CD8-positive, alpha-beta T cell (primary cell): ENCODE measurements at regions of chr4 and their contacts with region 1.

Region 1: DNA sequence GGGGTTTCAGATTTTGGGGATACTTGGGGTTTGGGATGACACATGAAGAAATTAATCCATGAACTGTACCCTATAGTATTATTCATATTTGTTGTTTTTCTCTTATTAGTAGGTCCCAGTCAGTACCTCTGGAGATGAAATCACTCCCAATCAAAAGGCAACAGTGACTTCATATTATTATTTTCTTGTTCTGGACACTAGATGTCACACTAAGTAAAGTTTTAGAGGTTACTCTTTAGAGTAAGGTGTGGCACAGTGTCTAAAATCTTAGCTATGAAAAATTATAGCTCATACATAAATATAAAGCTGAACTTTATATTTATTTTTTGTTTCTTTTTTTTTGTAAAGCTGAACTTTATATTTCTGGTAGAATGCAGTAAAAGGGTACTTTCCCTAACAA is 35.1 kb downstream of the FAM114A1 start:
- DNase-seq: peak in 2 of 9 experiments; percentile 52 to 68
- ATAC-seq: peak; percentile 87
- H3K4me3 ChIP-seq: no peak overlapping the region
- H3K4me3 Mint-ChIP-seq: no peak overlapping the region
- H3K27ac ChIP-seq: no peak overlapping the region
- H3K27ac Mint-ChIP-seq: no peak overlapping the region
- H3K4me1 ChIP-seq: no peaks in the 10 kb centered on the region
- H3K4me1 Mint-ChIP-seq: peaks cover 4% of the 10 kb centered on the region
- H3K27me3 ChIP-seq: no peaks in the 10 kb centered on the region
- H3K27me3 Mint-ChIP-seq: peaks cover 2% of the 10 kb centered on the region
- CTCF ChIP-seq: peak; percentile 71

Region 2: DNA sequence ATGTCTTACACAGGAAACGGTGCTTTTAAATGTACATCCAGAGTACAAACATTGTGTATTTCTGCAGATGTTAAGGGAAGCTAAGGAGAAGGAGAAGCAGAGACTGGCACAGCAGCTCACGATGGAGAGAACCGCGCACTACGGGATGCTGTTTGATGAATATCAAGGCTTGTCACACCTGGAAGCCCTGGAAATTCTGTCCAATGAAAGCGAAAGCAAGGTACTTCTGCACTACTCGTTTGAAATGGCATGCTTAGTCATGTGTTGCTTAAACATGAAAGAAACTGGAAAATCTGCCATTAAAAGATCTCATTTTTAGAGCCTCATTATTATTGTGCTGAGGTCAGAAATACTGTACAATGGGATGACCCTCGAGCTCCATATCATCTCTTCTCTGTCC is 12.2 kb after region 1 on chr4:
- CTCF ChIA-PET with region 1: interaction called, 25 read pairs
- POLR2A ChIA-PET with region 1: no interaction called
- intact Hi-C with region 1: no loop called
- DNase-seq: peak in 1 of 9 experiments; percentile 7
- ATAC-seq: no peak
- H3K4me3 ChIP-seq: no peak overlapping the region
- H3K4me3 Mint-ChIP-seq: peak overlapping the region; percentile 49
- H3K27ac ChIP-seq: no peak overlapping the region
- H3K27ac Mint-ChIP-seq: no peak overlapping the region
- H3K4me1 ChIP-seq: no peaks in the 10 kb centered on the region
- H3K4me1 Mint-ChIP-seq: peaks cover 9% of the 10 kb centered on the region
- H3K27me3 ChIP-seq: no peaks in the 10 kb centered on the region
- H3K27me3 Mint-ChIP-seq: no peaks in the 10 kb centered on the region
- CTCF ChIP-seq: no peak

Region 3: GRCh38 chr4:39054497-39054896 is 151.8 kb after region 1 on chr4:
- CTCF ChIA-PET with region 1: interaction called, 13 read pairs
- POLR2A ChIA-PET with region 1: no interaction called
- intact Hi-C with region 1: no loop called
- DNase-seq: no peak
- ATAC-seq: no peak
- H3K4me3 ChIP-seq: no peak overlapping the region
- H3K4me3 Mint-ChIP-seq: no peak overlapping the region
- H3K27ac ChIP-seq: no peak overlapping the region
- H3K27ac Mint-ChIP-seq: no peak overlapping the region
- H3K4me1 ChIP-seq: no peaks in the 10 kb centered on the region
- H3K4me1 Mint-ChIP-seq: peaks cover 17% of the 10 kb centered on the region
- H3K27me3 ChIP-seq: no peaks in the 10 kb centered on the region
- H3K27me3 Mint-ChIP-seq: no peaks in the 10 kb centered on the region
- CTCF ChIP-seq: no peak

Region 4: DNA sequence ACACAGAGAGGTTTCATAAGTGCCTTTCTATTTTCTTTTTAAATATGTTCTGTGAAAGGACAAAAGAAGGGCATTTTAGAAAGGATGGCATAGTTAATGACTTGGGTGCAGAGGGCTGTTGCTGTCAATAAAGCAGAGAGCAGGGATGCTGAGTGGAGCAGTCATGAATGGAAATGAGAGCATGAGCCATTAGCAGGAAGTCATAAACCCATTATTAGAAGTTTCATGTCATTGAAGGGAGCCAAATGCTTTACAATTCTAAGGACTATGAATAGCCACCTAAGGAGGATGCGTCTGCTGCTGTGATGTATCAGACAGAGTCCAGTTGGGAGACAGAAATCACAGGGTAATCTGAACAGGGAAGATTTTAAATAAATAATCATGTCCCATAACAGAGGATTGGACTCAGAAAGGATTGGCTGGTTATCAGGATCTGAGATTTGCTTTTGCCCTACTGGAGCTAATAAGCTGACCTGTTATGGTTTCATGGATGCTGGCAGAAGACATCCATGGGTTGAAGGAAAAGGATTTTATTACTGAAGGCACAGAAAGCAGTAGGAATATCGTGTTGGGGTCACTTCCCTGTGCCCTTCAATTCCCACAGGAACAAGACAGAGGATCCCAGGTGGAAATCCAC is 232.1 kb after region 1 on chr4:
- CTCF ChIA-PET with region 1: interaction called, 180 read pairs
- POLR2A ChIA-PET with region 1: interaction called, 4 read pairs
- intact Hi-C with region 1: loop called (anchors 1 kb)
- DNase-seq: no peak
- ATAC-seq: no peak
- H3K4me3 ChIP-seq: no peak overlapping the region
- H3K4me3 Mint-ChIP-seq: no peak overlapping the region
- H3K27ac ChIP-seq: no peak overlapping the region
- H3K27ac Mint-ChIP-seq: no peak overlapping the region
- H3K4me1 ChIP-seq: peaks cover 3% of the 10 kb centered on the region
- H3K4me1 Mint-ChIP-seq: peaks cover 4% of the 10 kb centered on the region
- H3K27me3 ChIP-seq: no peaks in the 10 kb centered on the region
- H3K27me3 Mint-ChIP-seq: no peaks in the 10 kb centered on the region
- CTCF ChIP-seq: no peak

Region 5: DNA sequence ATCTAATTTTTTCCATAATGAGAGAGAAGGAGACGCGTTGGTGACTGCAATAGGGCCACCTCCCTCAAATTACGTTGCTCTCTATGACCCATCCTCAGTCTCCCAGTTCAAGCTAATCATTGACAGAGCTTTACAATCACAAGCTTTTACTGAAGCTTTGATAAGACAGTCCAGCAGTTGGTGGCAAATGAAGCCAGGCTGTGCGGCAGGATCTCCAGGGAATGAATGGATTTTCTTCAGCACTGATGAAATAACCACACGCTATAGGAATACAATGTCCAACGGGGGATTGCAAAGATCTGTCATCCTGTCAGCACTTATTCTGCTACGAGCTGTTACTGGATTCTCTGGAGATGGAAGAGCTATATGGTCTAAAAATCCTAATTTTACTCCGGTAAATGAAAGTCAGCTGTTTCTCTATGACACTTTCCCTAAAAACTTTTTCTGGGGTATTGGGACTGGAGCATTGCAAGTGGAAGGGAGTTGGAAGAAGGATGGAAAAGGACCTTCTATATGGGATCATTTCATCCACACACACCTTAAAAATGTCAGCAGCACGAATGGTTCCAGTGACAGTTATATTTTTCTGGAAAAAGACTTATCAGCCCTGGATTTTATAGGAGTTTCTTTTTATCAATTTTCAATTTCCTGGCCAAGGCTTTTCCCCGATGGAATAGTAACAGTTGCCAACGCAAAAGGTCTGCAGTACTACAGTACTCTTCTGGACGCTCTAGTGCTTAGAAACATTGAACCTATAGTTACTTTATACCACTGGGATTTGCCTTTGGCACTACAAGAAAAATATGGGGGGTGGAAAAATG is 504.3 kb after region 1 on chr4 and contains the start of gene KLB:
- CTCF ChIA-PET with region 1: no interaction called
- POLR2A ChIA-PET with region 1: no interaction called
- intact Hi-C with region 1: loop called in 1 of 2 experiments (anchors 10 kb)
- DNase-seq: no peak
- ATAC-seq: no peak
- H3K4me3 ChIP-seq: no peak within 1 kb of the TSS
- H3K4me3 Mint-ChIP-seq: no peak within 1 kb of the TSS
- H3K27ac ChIP-seq: no peak within 1 kb of the TSS
- H3K27ac Mint-ChIP-seq: no peak within 1 kb of the TSS
- H3K4me1 ChIP-seq: no peaks in the 10 kb centered on the region
- H3K4me1 Mint-ChIP-seq: no peaks in the 10 kb centered on the region
- H3K27me3 ChIP-seq: no peaks in the 10 kb centered on the region
- H3K27me3 Mint-ChIP-seq: no peaks in the 10 kb centered on the region
- CTCF ChIP-seq: no peak
- total RNA-seq, gene KLB: 0.05 to 0.06 TPM